ENCODE measurements at regions of chr3 and their contacts with region 1.

Region 1: GRCh38 chr3:88113311-88114162 is 36.2 kb upstream of the C3orf38 start:
- DNase-seq: peak; percentile 8 to 65 (median 48)
- H3K4me3 ChIP-seq: no peak overlapping the region
- H3K4me3 Mint-ChIP-seq: no peak overlapping the region
- H3K27ac ChIP-seq: no peak overlapping the region
- H3K27ac Mint-ChIP-seq: peak overlapping the region in 6 of 8 donors; percentile 11 to 73 (median 55)
- H3K4me1 ChIP-seq: no peaks in the 10 kb centered on the region
- H3K4me1 Mint-ChIP-seq: peaks cover 25 to 30% (median 26%) of the 10 kb centered on the region in 3 donors
- H3K27me3 ChIP-seq: no peaks in the 10 kb centered on the region
- H3K27me3 Mint-ChIP-seq: no peaks in the 10 kb centered on the region

Region 2: GRCh38 chr3:87350364-87351199 is 763.0 kb before region 1 on chr3:
- CTCF ChIA-PET with region 1: interaction called, 11 read pairs
- POLR2A ChIA-PET with region 1: no interaction called
- DNase-seq: peak in 4 of 5 donors; percentile 2 to 52 (median 42)
- H3K4me3 ChIP-seq: no peak overlapping the region
- H3K4me3 Mint-ChIP-seq: no peak overlapping the region
- H3K27ac ChIP-seq: no peak overlapping the region
- H3K27ac Mint-ChIP-seq: no peak overlapping the region
- H3K4me1 ChIP-seq: no peaks in the 10 kb centered on the region
- H3K4me1 Mint-ChIP-seq: no peaks in the 10 kb centered on the region
- H3K27me3 ChIP-seq: no peaks in the 10 kb centered on the region
- H3K27me3 Mint-ChIP-seq: peaks cover 2 to 20% of the 10 kb centered on the region in 2 donors

Region 3: DNA sequence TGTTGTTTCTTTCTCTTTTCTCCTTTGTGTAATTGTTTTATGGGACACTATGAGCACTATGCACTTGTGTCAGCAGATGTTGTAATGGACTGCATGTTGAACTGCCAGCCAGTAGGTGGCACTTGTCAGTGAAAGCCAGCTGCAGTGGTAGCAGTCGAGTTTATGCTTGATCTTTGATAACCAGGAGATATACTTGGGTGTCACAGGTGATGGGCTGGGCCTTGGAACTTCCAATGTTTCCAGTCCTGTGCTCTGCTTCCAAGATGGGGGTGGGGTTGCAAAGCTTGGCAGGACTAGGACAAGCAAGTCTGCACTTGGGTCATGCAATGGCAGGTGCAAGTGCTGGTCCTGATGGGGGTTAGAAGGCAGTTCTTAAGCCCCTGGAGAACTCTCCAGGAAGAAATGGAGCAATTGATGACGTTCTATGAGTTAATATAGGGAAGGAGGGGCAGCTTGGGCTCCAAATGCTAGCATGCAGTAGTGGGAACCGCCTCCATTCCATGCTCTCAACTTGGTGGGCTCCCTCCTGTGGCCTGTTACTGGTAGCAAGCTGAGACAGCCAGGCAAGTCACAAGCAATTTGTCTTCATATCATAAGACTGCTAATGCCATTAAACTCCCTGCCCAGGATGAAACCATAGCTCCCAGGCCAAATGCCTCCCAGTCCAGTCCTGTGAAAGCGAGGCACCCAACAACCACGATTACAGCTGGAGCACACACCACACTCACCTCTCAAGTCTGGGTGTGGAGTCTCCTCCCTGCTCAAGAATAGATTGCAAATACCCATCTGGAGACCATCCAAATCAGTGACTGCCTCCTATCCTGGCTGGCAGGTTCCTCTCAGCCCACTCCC is 342.0 kb before region 1 on chr3:
- CTCF ChIA-PET with region 1: interaction called, 11 read pairs
- POLR2A ChIA-PET with region 1: no interaction called
- DNase-seq: peak in 4 of 5 donors; percentile 4 to 56 (median 28)
- H3K4me3 ChIP-seq: no peak overlapping the region
- H3K4me3 Mint-ChIP-seq: no peak overlapping the region
- H3K27ac ChIP-seq: no peak overlapping the region
- H3K27ac Mint-ChIP-seq: no peak overlapping the region
- H3K4me1 ChIP-seq: no peaks in the 10 kb centered on the region
- H3K4me1 Mint-ChIP-seq: no peaks in the 10 kb centered on the region
- H3K27me3 ChIP-seq: no peaks in the 10 kb centered on the region
- H3K27me3 Mint-ChIP-seq: peaks cover 6 to 26% of the 10 kb centered on the region in 2 donors